PC-3 (cell line): ENCODE measurements at regions of chr12 and their contacts with region 1.

Region 1: GRCh38 chr12:106897082-106897481 is 58.6 kb upstream of the TMEM263 start:
- DNase-seq: peak; percentile 50
- ATAC-seq: peak; percentile 21; the same call in 1 of the 2 replicates
- H3K4me3 ChIP-seq: no peak overlapping the region
- H3K27ac ChIP-seq: no peak overlapping the region
- H3K4me1 ChIP-seq: no peaks in the 10 kb centered on the region
- H3K27me3 ChIP-seq: no peaks in the 10 kb centered on the region
- CTCF ChIP-seq: peak; percentile 48; the same call in 1 of the 2 replicates

Region 2: DNA sequence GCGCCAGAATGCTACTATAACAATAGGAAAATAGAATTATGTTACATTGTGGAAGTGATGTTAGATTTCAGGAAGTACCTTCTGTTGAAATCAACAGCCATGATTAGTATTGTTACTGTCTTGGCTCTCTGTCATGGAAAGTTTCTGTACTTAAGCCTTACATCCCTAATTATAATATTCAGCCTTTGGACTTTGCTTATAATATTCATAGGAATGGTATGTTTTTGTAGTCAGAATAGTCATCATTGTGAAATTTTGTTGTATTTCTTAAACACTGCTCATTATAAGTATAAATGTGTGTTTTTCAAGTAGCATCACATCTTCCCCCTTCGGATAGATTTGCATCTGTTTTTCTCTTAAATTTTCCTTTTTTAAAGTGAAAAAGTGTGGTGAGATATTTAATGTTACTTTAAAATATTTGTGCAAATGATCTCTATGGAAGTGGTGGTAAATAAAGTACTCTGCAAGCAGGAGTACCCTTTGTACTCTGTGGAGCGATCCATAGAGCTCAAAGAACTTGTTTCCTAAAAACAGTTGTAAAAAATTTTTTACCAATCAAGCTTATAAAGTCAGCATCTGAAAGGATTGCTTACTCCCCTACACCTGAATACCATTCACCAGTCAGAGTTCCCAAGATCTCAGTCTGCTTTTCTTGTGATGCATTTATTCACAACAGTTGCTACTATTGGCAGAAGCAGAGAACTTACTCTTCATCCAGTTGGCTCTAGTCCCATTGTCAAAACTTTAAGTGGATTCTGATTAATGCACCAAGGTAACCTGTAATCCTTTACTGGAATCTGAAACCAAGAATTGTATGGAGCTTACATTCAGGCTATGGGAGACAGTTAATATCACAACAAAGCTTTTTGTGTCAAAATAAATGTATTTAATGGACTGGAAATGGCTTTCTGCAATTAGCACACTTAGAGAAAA is 34.8 kb before region 1 on chr12:
- CTCF ChIA-PET with region 1: no interaction called
- POLR2A ChIA-PET with region 1: no interaction called
- intact Hi-C with region 1: loop called (anchors 5 kb)
- DNase-seq: peak; percentile 82
- ATAC-seq: peak; percentile 89
- H3K4me3 ChIP-seq: peak overlapping the region; percentile 16
- H3K27ac ChIP-seq: peak overlapping the region; percentile 46
- H3K4me1 ChIP-seq: peaks cover 23% of the 10 kb centered on the region
- H3K27me3 ChIP-seq: no peaks in the 10 kb centered on the region
- CTCF ChIP-seq: no peak

Region 3: DNA sequence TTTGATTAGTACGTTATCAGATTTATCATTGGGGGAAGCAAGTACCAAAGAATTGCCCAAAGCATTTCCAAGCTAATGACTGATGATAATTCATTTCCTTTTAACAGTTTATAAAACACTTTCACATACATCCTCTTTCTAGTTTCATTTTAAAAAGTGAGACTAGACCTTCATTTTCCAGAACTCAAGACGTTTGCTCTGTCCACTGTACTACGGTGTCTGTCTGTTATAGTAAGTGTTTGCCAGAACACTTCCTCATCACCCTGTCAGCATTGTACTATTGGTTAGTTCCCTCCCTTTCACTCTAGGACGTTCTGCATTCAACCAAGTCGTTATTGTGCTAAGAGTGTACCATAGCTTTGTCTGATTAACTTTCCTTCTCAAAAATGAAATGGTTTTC is 23.1 kb before region 1 on chr12:
- CTCF ChIA-PET with region 1: no interaction called
- POLR2A ChIA-PET with region 1: no interaction called
- intact Hi-C with region 1: no loop called
- DNase-seq: no peak
- ATAC-seq: no peak
- H3K4me3 ChIP-seq: no peak overlapping the region
- H3K27ac ChIP-seq: no peak overlapping the region
- H3K4me1 ChIP-seq: peaks cover 13% of the 10 kb centered on the region
- H3K27me3 ChIP-seq: no peaks in the 10 kb centered on the region
- CTCF ChIP-seq: no peak